ENCODE measurements at regions of chr11 and their contacts with region 1.

Region 1: GRCh38 chr11:12281571-12282478 is 95.5 kb upstream of the PARVA start:
- DNase-seq: peak; percentile 83
- H3K4me3 Mint-ChIP-seq: no peak overlapping the region
- H3K27ac Mint-ChIP-seq: no peak overlapping the region
- H3K4me1 Mint-ChIP-seq: peaks cover 31% of the 10 kb centered on the region
- H3K27me3 Mint-ChIP-seq: no peaks in the 10 kb centered on the region
- CTCF ChIP-seq: peak; percentile 95

Region 2: DNA sequence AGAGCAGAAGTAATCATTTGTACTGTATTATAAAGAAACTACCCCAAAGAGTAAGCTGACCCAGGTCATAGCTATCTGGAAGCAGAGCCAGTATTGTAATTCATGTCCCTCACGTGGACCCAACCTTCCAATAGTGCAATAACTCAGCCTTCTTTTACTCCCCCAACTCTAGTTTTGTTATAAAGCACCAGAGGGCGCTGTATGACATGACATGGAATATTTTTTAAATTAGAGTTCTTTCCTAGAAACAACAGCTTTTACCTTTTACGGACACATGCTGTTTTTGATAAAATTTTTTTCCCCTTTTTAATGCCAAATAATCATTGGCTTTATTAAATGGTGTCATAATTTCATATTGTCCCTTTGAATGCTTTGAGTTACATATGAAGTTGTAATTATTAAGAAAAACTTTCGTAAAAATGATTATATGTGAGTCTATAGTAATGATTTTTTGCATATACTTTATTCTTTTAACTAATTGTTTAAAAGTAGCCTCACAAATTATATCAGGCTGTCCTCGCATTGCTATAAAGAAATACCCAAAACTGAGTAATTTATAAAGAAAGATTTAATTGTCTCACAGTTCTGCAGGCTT is 350.3 kb before region 1 on chr11:
- CTCF ChIA-PET with region 1: interaction called, 15 read pairs
- POLR2A ChIA-PET with region 1: interaction called, 6 read pairs
- intact Hi-C with region 1: loop called (anchors 2 kb)
- DNase-seq: peak; percentile 80
- H3K4me3 Mint-ChIP-seq: no peak overlapping the region
- H3K27ac Mint-ChIP-seq: no peak overlapping the region
- H3K4me1 Mint-ChIP-seq: no peaks in the 10 kb centered on the region
- H3K27me3 Mint-ChIP-seq: no peaks in the 10 kb centered on the region
- CTCF ChIP-seq: peak; percentile 80

Region 3: DNA sequence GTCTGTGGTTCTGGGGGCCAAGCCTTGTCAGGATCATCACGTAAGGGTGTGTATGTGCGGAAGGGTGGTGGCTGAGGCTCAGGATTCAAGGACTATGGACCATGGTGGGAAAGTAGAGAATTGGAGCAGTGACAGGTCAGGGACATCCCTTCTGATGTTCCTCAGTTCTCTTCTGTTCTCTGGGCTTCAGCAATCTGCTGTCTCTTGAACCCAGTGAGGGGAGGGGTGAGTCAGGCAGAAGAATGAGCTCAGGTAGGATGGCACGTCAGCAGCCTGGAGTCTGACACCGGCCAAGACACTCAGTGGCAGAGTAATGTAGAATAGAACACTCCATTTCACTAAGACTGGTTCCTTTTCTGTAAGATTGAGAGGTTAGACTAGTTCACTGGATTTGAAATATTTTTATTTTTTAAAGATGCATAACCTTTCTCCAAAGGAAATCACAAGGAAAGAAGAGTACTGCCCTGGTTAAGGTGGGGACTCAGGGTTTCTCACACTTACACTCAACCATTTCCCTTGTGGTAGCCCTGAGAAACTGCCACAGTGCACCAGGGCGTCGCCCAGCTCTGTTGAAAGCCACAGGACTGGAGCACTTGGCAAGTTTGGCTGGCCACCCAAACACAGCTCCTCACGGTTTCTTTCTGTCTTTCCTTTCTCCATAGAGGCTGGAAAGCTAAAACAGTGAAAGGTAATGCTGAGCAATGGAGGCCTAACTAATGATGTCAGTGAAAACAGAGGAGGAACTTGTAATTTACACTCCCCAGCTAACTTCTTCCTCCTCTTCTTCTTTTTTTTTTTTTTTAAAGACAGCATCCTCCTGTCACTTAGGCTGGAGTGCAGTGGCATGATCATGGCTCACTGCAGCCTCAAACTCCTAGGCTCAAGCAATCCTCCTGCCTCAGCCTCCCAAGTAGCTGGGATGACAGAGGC is 194.5 kb before region 1 on chr11:
- CTCF ChIA-PET with region 1: interaction called, 40 read pairs
- POLR2A ChIA-PET with region 1: no interaction called
- intact Hi-C with region 1: loop called (anchors 1 kb)
- DNase-seq: peak; percentile 70
- H3K4me3 Mint-ChIP-seq: peak overlapping the region; percentile 8
- H3K27ac Mint-ChIP-seq: peak overlapping the region; percentile 37
- H3K4me1 Mint-ChIP-seq: peaks cover 45% of the 10 kb centered on the region
- H3K27me3 Mint-ChIP-seq: no peaks in the 10 kb centered on the region
- CTCF ChIP-seq: peak; percentile 11

Region 4: DNA sequence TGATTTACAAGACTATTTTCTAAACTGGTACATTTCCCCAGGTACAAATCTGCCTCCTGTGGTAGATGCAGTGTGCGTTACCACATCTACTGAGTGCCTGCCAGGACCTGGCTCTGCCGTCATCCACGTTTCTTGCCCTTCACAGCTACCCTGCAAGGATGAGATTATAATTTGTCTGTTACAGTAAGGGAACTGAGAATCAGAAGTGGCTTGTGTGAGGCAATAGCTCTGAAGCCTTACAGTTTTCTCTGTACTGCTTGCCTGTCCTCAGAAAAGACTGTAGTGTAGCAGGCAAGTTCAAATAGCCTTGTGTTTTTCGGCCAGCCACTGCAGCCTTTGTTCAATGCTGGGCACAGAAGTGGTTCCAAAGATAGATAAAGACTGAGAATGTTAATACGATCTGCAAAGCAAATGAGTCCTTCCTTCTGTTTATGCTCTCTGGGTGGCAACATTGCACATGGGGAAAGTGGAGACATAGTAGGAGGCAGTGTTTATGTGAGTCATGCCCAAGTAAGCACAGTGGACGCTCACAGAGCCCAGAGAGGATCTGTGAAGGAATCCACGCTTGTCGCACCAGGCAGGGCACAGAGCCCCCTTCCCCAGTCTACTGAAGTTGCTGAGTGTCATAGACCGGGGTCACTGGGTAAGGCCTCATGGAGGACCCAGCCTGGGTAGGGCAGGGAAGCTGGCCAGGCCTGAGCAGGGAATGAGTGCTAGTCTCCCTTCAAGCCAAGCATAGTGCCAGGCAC is 122.3 kb before region 1 on chr11:
- CTCF ChIA-PET with region 1: interaction called, 5 read pairs
- POLR2A ChIA-PET with region 1: interaction called, 3 read pairs
- intact Hi-C with region 1: loop called (anchors 5 kb)
- DNase-seq: peak; percentile 81
- H3K4me3 Mint-ChIP-seq: no peak overlapping the region
- H3K27ac Mint-ChIP-seq: peak overlapping the region; percentile 85
- H3K4me1 Mint-ChIP-seq: peaks cover 30% of the 10 kb centered on the region
- H3K27me3 Mint-ChIP-seq: no peaks in the 10 kb centered on the region
- CTCF ChIP-seq: no peak

Region 5: GRCh38 chr11:12361682-12362081 is 79.9 kb after region 1 on chr11:
- CTCF ChIA-PET with region 1: no interaction called
- POLR2A ChIA-PET with region 1: no interaction called
- intact Hi-C with region 1: no loop called
- DNase-seq: no peak
- H3K4me3 Mint-ChIP-seq: no peak overlapping the region
- H3K27ac Mint-ChIP-seq: no peak overlapping the region
- H3K4me1 Mint-ChIP-seq: no peaks in the 10 kb centered on the region
- H3K27me3 Mint-ChIP-seq: peaks cover 17% of the 10 kb centered on the region
- CTCF ChIP-seq: no peak

Region 6: DNA sequence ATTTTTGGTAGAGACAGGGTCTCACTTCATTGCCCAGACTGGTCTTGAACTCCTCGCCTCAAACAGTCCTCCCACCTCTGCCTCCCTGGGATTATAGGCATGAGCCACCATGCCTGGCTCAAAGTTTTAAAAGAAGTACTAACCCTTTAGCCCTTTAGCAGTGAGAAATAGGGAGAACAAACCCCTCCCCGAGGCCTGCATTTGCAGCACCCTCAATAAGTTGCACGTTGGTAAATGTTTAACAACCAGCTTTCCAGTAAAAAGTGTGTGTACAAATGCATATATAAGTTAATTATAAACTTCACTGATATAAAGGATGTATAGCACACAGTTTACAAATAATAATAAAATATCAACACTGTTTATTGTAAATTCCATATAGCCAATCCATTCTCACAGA is 147.3 kb after region 1 on chr11:
- CTCF ChIA-PET with region 1: no interaction called
- POLR2A ChIA-PET with region 1: no interaction called
- intact Hi-C with region 1: no loop called
- DNase-seq: no peak
- H3K4me3 Mint-ChIP-seq: no peak overlapping the region
- H3K27ac Mint-ChIP-seq: no peak overlapping the region
- H3K4me1 Mint-ChIP-seq: peaks cover 23% of the 10 kb centered on the region
- H3K27me3 Mint-ChIP-seq: no peaks in the 10 kb centered on the region
- CTCF ChIP-seq: no peak

Measured in MCF 10A (cell line).